Thyroid gland (tissue), 4 donors: ENCODE measurements at regions of chr9 and their contacts with region 1.

Region 1: GRCh38 chr9:96667361-96667728 is 12.2 kb upstream of the PRXL2C start:
- DNase-seq: no peak
- H3K4me3 ChIP-seq: no peak overlapping the region
- H3K27ac ChIP-seq: no peak overlapping the region
- H3K4me1 ChIP-seq: no peaks in the 10 kb centered on the region
- H3K27me3 ChIP-seq: no peaks in the 10 kb centered on the region
- CTCF ChIP-seq: no peak
- POLR2A ChIP-seq: no peak

Region 2: DNA sequence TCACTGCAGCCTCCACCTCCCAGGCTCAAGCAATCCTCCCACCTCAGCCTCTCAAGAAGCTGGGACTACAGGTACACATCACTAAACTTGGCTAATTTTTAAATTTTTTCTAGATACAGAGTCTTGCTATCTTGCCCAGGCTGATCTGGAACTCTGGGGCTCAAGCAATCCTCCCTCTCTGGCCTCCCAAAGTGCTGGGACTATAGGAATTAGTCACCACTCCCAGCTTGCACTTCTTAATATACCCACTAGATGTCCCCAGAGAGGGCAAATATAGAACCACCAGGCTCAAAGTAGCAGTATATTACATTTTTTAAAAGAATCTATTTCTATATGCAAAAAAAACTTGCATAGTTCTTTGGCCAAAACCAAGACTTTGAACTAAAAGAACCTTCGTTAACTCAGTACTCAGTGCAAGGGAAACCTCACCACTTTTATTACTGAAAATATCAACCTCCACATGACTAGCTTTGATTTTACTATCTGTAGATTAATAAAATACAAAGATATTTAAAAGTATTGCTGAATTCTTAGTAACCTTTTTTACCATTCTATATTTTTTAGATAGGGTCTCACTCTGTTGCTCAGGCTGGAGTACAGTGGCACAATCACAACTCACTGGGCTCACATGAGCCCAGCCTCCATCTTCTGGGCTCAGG is 339.5 kb before region 1 on chr9:
- intact Hi-C with region 1: loop called (anchors 2 kb)
- DNase-seq: peak; percentile 19
- H3K4me3 ChIP-seq: no peak overlapping the region
- H3K27ac ChIP-seq: no peak overlapping the region
- H3K4me1 ChIP-seq: no peaks in the 10 kb centered on the region
- H3K27me3 ChIP-seq: no peaks in the 10 kb centered on the region
- CTCF ChIP-seq: peak; percentile 59 to 91 (median 82)
- POLR2A ChIP-seq: no peak

Region 3: DNA sequence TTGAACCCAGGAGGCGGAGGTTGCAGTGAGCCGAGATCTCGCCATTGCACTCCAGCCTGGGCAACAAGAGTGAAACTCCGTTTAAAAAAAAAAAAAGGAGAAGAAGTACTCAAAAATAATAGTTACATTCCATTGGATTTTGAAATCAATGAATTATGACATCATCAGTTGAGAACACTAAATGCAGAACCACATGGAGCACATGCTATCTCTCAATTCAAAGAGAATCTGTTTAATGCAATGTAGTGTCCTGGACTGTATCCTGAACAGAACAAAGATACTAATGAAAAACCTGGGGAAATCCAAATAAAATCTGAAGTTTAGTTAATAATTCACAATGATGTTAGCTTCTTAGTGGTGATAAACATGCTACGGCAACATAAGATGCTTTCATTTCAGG is 68.0 kb before region 1 on chr9:
- intact Hi-C with region 1: no loop called
- DNase-seq: no peak
- H3K4me3 ChIP-seq: no peak overlapping the region
- H3K27ac ChIP-seq: no peak overlapping the region
- H3K4me1 ChIP-seq: peaks cover 22 to 23% of the 10 kb centered on the region in 2 donors
- H3K27me3 ChIP-seq: no peaks in the 10 kb centered on the region
- CTCF ChIP-seq: no peak
- POLR2A ChIP-seq: no peak